Aorta (tissue), 5 donors: ENCODE measurements at regions of chr9 and their contacts with region 1.

Region 1: GRCh38 chr9:115164511-115164974 is 46.6 kb upstream of the TNC start:
- DNase-seq: peak in 1 of 2 donors; percentile 70
- ATAC-seq: no peak
- H3K4me3 ChIP-seq: no peak overlapping the region
- H3K27ac ChIP-seq: no peak overlapping the region
- H3K4me1 ChIP-seq: no peaks in the 10 kb centered on the region
- H3K27me3 ChIP-seq: no peaks in the 10 kb centered on the region

Region 2: GRCh38 chr9:115204904-115205453 is 40.4 kb after region 1 on chr9:
- intact Hi-C with region 1: loop called in 1 of 2 experiments (anchors 5 kb)
- DNase-seq: no peak
- ATAC-seq: no peak
- H3K4me3 ChIP-seq: no peak overlapping the region
- H3K27ac ChIP-seq: no peak overlapping the region
- H3K4me1 ChIP-seq: peaks cover 0 to 3% of the 10 kb centered on the region in 2 donors
- H3K27me3 ChIP-seq: no peaks in the 10 kb centered on the region